Naive thymus-derived CD8-positive, alpha-beta T cell (primary cell): ENCODE measurements at regions of chr2 and their contacts with region 1.

Region 1: GRCh38 chr2:229835596-229836283 is 86.1 kb downstream of the TRIP12 start:
- DNase-seq: peak in 4 of 10 donors; percentile 15 to 74 (median 52)
- ATAC-seq: peak; percentile 70 to 94
- H3K4me3 Mint-ChIP-seq: peak overlapping the region; percentile 22 to 81 (median 54)
- H3K27ac Mint-ChIP-seq: peak overlapping the region; percentile 44 to 96 (median 80)
- H3K4me1 Mint-ChIP-seq: peaks cover 17 to 72% (median 68%) of the 10 kb centered on the region in 4 donors
- H3K27me3 Mint-ChIP-seq: no peaks in the 10 kb centered on the region

Region 2: DNA sequence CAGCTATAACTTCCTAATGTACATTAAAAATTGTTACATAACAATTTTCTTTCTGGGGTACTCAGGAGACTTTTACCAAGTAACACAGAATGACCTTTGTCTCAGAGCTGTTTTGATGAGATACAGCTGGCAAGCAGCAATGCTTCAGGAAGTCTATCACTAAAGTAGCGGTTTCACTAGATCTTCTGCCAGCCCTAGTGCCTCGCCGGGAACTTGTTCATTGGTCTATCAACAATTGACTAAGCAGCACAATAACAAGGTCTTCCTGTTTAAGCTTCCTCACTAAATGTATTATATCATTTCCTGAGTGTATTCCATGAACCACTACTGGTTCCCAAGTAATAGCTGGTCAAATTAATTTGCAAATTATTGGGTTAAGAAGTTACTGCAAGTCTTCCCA is 16.8 kb after region 1 on chr2:
- POLR2A ChIA-PET with region 1: interaction called, 15 read pairs
- DNase-seq: peak; percentile 8 to 71 (median 38)
- ATAC-seq: peak; percentile 95 to 96
- H3K4me3 Mint-ChIP-seq: peak overlapping the region in 8 of 10 donors; percentile 12 to 64 (median 44)
- H3K27ac Mint-ChIP-seq: peak overlapping the region; percentile 63 to 95 (median 85)
- H3K4me1 Mint-ChIP-seq: peaks cover 29 to 67% (median 66%) of the 10 kb centered on the region in 4 donors
- H3K27me3 Mint-ChIP-seq: no peaks in the 10 kb centered on the region

Region 3: GRCh38 chr2:229947544-229947943 is 111.8 kb after region 1 on chr2:
- POLR2A ChIA-PET with region 1: no interaction called
- DNase-seq: no peak
- ATAC-seq: no peak
- H3K4me3 Mint-ChIP-seq: no peak overlapping the region
- H3K27ac Mint-ChIP-seq: peak overlapping the region in 1 of 10 donors; percentile 41
- H3K4me1 Mint-ChIP-seq: peaks cover 0 to 7% (median 4%) of the 10 kb centered on the region in 4 donors
- H3K27me3 Mint-ChIP-seq: no peaks in the 10 kb centered on the region